ENCODE measurements at regions of chr1 and their contacts with region 1.

Region 1: GRCh38 chr1:199123615-199124014 is 484.8 kb downstream of the PTPRC start:
- DNase-seq: no peak
- ATAC-seq: no peak
- H3K4me3 ChIP-seq: no peak overlapping the region
- H3K4me3 Mint-ChIP-seq: no peak overlapping the region
- H3K27ac ChIP-seq: no peak overlapping the region
- H3K27ac Mint-ChIP-seq: no peak overlapping the region
- H3K4me1 ChIP-seq: no peaks in the 10 kb centered on the region
- H3K4me1 Mint-ChIP-seq: peaks cover 3% of the 10 kb centered on the region
- H3K27me3 ChIP-seq: no peaks in the 10 kb centered on the region
- H3K27me3 Mint-ChIP-seq: no peaks in the 10 kb centered on the region
- CTCF ChIP-seq: no peak

Region 2: GRCh38 chr1:199079994-199080393 is 43.6 kb before region 1 on chr1:
- CTCF ChIA-PET with region 1: no interaction called
- POLR2A ChIA-PET with region 1: no interaction called
- intact Hi-C with region 1: loop called in 1 of 2 experiments (anchors 1 kb)
- DNase-seq: no peak
- ATAC-seq: no peak
- H3K4me3 ChIP-seq: no peak overlapping the region
- H3K4me3 Mint-ChIP-seq: no peak overlapping the region
- H3K27ac ChIP-seq: no peak overlapping the region
- H3K27ac Mint-ChIP-seq: no peak overlapping the region
- H3K4me1 ChIP-seq: no peaks in the 10 kb centered on the region
- H3K4me1 Mint-ChIP-seq: no peaks in the 10 kb centered on the region
- H3K27me3 ChIP-seq: no peaks in the 10 kb centered on the region
- H3K27me3 Mint-ChIP-seq: no peaks in the 10 kb centered on the region
- CTCF ChIP-seq: no peak

Measured in CD4-positive, alpha-beta T cell (primary cell).